Panc1 (cell line): ENCODE measurements at regions of chr3 and their contacts with region 1.

Region 1: DNA sequence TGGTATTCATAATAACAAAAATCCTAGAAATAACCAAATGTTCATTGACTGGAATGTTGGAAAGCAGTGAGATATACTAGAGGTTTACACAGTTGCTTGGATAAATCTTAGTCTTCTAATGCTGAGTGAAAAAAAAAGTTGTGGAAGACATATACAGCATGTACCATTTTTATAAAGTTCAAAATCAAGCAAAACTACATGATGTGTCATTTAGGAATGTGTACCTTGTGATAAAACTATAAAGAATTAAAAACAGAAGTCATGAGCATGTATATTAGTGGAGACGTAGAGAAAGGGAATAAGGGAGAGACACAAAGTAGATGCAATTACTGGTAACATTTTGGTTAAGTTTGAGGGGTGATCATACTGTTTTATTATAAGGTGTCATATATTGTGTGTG is 45.2 kb downstream of the FBXL2 start:
- DNase-seq: no peak
- ATAC-seq: no peak
- H3K4me3 ChIP-seq: no peak overlapping the region
- H3K27ac ChIP-seq: no peak overlapping the region
- H3K4me1 ChIP-seq: no peaks in the 10 kb centered on the region; the same call in 1 of the 2 replicates
- H3K27me3 ChIP-seq: no peaks in the 10 kb centered on the region
- CTCF ChIP-seq: no peak

Region 2: GRCh38 chr3:33277193-33277882 is 45.1 kb before region 1 on chr3 and contains the start of gene FBXL2:
- CTCF ChIA-PET with region 1: no interaction called
- POLR2A ChIA-PET with region 1: interaction called, 13 read pairs
- in situ Hi-C with region 1: no loop called
- intact Hi-C with region 1: no loop called
- DNase-seq: no peak
- ATAC-seq: peak; percentile 98
- H3K4me3 ChIP-seq: peak within 1 kb of the TSS; percentile 72 to 81
- H3K27ac ChIP-seq: peak within 1 kb of the TSS; percentile 74
- H3K4me1 ChIP-seq: peaks cover 3% of the 10 kb centered on the region; the same call in 1 of the 2 replicates
- H3K27me3 ChIP-seq: no peaks in the 10 kb centered on the region
- CTCF ChIP-seq: no peak
- total RNA-seq, gene FBXL2: 12.3 TPM

Region 3: GRCh38 chr3:33385423-33385822 is 63.0 kb after region 1 on chr3:
- CTCF ChIA-PET with region 1: no interaction called
- POLR2A ChIA-PET with region 1: no interaction called
- in situ Hi-C with region 1: no loop called
- intact Hi-C with region 1: no loop called
- DNase-seq: no peak
- ATAC-seq: no peak
- H3K4me3 ChIP-seq: no peak overlapping the region
- H3K27ac ChIP-seq: no peak overlapping the region
- H3K4me1 ChIP-seq: no peaks in the 10 kb centered on the region
- H3K27me3 ChIP-seq: no peaks in the 10 kb centered on the region
- CTCF ChIP-seq: no peak

Region 4: GRCh38 chr3:33773637-33774036 is 451.2 kb after region 1 on chr3:
- CTCF ChIA-PET with region 1: no interaction called
- POLR2A ChIA-PET with region 1: no interaction called
- in situ Hi-C with region 1: no loop called
- intact Hi-C with region 1: no loop called
- DNase-seq: no peak
- ATAC-seq: no peak
- H3K4me3 ChIP-seq: no peak overlapping the region
- H3K27ac ChIP-seq: no peak overlapping the region
- H3K4me1 ChIP-seq: no peaks in the 10 kb centered on the region
- H3K27me3 ChIP-seq: no peaks in the 10 kb centered on the region
- CTCF ChIP-seq: no peak